ENCODE measurements at regions of chr1 and their contacts with region 1.

Region 1: DNA sequence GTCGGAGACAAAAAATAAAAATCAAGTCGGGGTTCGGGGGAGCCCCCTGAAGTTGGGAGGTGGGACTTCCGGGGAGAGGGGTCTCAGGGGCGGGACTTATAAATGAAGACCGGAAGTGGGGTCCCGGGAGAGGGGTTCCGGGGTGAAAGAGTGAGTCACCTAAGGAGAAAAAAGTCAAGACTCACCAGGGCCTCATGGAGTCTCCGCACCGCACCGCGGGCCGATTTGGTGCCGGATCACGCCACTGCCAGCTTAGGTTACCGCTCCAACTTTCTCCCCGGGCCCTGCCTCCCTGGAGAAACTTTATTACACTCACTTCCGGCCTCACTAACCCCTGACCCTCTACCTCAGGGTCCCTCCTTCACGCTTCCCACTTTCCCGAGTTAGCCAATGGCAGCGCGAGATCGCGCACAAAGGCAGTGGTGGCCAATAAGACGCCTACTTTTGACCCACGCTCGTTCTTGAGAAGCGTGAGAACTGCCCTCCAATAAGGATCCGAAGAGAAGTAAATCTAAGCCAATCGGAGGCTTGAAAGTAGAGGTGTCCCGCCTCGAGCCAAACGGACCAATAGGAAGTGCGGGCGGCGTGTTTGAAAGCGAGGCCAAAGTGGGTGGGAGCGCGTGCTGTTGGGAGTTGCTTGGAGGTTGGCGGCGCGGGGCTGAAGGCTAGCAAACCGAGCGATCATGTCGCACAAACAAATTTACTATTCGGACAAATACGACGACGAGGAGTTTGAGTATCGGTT is at the start of gene CKS1B:
- DNase-seq: peak; percentile 97
- H3K4me3 Mint-ChIP-seq: no peak within 1 kb of the TSS
- H3K27ac Mint-ChIP-seq: no peak within 1 kb of the TSS
- H3K4me1 Mint-ChIP-seq: peaks cover 45% of the 10 kb centered on the region
- H3K27me3 Mint-ChIP-seq: no peaks in the 10 kb centered on the region
- total RNA-seq, gene CKS1B: 151 to 162 TPM

Region 2: GRCh38 chr1:154906621-154907081 is 67.6 kb before region 1 on chr1:
- CTCF ChIA-PET with region 1: no interaction called
- POLR2A ChIA-PET with region 1: no interaction called
- DNase-seq: no peak
- H3K4me3 Mint-ChIP-seq: no peak overlapping the region
- H3K27ac Mint-ChIP-seq: no peak overlapping the region
- H3K4me1 Mint-ChIP-seq: no peaks in the 10 kb centered on the region
- H3K27me3 Mint-ChIP-seq: no peaks in the 10 kb centered on the region

Region 3: GRCh38 chr1:154955718-154956543 is 18.3 kb before region 1 on chr1 and contains the start of gene PBXIP1:
- CTCF ChIA-PET with region 1: interaction called, 24 read pairs
- POLR2A ChIA-PET with region 1: interaction called, 62 read pairs
- DNase-seq: peak; percentile 88
- H3K4me3 Mint-ChIP-seq: peak within 1 kb of the TSS; percentile 96
- H3K27ac Mint-ChIP-seq: peak within 1 kb of the TSS; percentile 97
- H3K4me1 Mint-ChIP-seq: peaks cover 85% of the 10 kb centered on the region
- H3K27me3 Mint-ChIP-seq: no peaks in the 10 kb centered on the region
- total RNA-seq, gene PBXIP1: 169 TPM

Region 4: GRCh38 chr1:154961497-154962262 is 12.6 kb before region 1 on chr1 and contains the start of gene PYGO2:
- CTCF ChIA-PET with region 1: interaction called, 24 read pairs
- POLR2A ChIA-PET with region 1: interaction called, 62 read pairs
- DNase-seq: peak; percentile 83
- H3K4me3 Mint-ChIP-seq: peak within 1 kb of the TSS; percentile 97
- H3K27ac Mint-ChIP-seq: peak within 1 kb of the TSS; percentile 89
- H3K4me1 Mint-ChIP-seq: peaks cover 56% of the 10 kb centered on the region
- H3K27me3 Mint-ChIP-seq: no peaks in the 10 kb centered on the region
- total RNA-seq, gene PYGO2: 48.7 to 49.7 TPM

Region 5: GRCh38 chr1:154992721-154993571 is 18.7 kb after region 1 on chr1:
- CTCF ChIA-PET with region 1: interaction called, 6 read pairs
- POLR2A ChIA-PET with region 1: interaction called, 23 read pairs
- DNase-seq: no peak
- H3K4me3 Mint-ChIP-seq: no peak overlapping the region
- H3K27ac Mint-ChIP-seq: no peak overlapping the region
- H3K4me1 Mint-ChIP-seq: peaks cover 23% of the 10 kb centered on the region
- H3K27me3 Mint-ChIP-seq: no peaks in the 10 kb centered on the region

Region 6: GRCh38 chr1:155008015-155008979 is 34.1 kb after region 1 on chr1:
- CTCF ChIA-PET with region 1: interaction called, 3 read pairs
- POLR2A ChIA-PET with region 1: interaction called, 26 read pairs
- DNase-seq: peak; percentile 77
- H3K4me3 Mint-ChIP-seq: peak overlapping the region; percentile 96
- H3K27ac Mint-ChIP-seq: peak overlapping the region; percentile 90
- H3K4me1 Mint-ChIP-seq: peaks cover 75% of the 10 kb centered on the region
- H3K27me3 Mint-ChIP-seq: no peaks in the 10 kb centered on the region

Measured in activated CD4-positive, alpha-beta memory T cell treated with anti-CD3 and anti-CD28 coated beads, Interleukin-2, amount 10 ng/mL, durations not matched to agents 7 days and 5 days (primary cell).